Esophagus muscularis mucosa (tissue), 4 donors: ENCODE measurements at regions of chr18 and their contacts with region 1.

Region 1: DNA sequence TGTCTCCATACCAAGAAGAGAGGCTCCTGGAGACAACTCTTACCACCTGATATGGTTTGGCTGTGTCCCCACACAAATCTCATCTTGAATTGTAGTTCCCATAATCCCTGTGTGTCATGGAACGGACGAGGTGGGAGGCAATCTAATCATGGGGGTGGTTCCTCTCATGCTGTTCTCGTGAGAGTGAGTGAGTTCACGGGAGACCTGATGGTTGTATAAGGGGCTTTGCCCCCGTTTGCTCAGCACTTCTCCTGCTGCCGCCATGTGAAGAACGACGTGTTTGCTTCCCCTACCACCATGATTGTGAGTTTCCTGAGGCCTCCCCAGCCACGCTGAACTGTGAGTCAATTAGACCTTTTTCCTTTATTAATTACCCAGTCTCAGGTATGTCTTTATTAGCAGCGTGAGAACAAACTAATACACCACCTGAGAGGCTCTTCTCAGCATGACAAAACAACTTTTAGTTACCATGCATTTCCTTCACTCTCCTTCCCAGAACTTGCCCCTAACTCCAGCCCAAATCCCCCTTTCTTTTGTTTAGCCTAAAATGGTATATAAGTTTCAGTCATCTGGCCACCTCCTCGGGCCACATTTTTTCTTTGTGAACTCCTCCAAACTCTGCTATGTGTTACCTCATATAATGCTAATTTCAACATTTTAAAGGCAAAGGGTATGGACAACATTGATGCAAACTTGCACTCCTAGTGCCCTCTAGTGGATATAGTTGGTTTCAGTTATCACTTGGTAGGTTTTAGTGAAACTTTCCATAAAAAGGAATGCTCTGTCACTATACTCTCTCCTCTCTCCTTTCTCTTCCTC is 58.6 kb upstream of the SLC25A52 start:
- DNase-seq: no peak
- H3K4me3 ChIP-seq: no peak overlapping the region
- H3K27ac ChIP-seq: no peak overlapping the region
- H3K4me1 ChIP-seq: no peaks in the 10 kb centered on the region
- H3K27me3 ChIP-seq: no peaks in the 10 kb centered on the region
- CTCF ChIP-seq: peak; percentile 48 to 73 (median 50)
- EP300 ChIP-seq: no peak
- POLR2A ChIP-seq: no peak

Region 2: DNA sequence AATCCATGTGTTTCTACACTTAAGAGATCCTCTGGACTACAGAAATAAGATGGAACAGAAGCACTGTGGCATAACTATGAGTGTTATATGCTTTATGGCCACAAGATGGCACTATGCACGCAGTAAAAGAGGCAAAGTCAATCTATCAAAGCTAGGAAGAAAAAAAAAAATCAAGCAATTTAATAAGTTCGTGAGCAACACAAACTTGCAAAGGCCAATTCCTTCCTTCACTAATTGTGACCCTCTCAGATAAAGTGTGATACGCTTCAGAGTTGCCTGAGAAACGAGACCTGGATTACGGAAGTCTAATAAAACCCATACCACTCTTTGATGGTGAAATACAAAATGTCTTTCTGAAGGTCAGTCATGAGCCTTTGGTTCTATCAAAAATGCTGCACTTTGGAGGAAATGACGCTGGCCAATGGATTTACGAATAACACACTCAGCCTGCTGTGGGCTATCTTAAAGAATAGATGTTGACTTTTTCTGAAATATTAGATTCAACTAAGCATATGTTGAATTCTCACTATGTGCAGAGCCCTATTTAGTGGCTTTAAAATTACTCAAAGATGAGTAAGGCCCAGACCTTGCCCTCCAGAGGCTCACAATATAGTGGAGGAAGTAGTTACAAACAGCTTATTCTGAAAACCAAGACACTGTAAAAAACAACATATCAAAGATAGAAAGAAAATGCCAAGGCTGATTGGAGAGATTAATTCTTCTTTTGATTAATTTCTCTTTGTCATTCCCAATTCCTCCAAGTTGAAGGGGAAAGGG is 263.2 kb before region 1 on chr18:
- intact Hi-C with region 1: loop called (anchors 5 kb)
- DNase-seq: no peak
- H3K4me3 ChIP-seq: no peak overlapping the region
- H3K27ac ChIP-seq: no peak overlapping the region
- H3K4me1 ChIP-seq: peaks cover 0 to 5% (median 0%) of the 10 kb centered on the region in 4 donors
- H3K27me3 ChIP-seq: no peaks in the 10 kb centered on the region
- CTCF ChIP-seq: peak; percentile 72 to 79 (median 76)
- EP300 ChIP-seq: no peak
- POLR2A ChIP-seq: no peak